Common myeloid progenitor, CD34-positive (primary cell): ENCODE measurements at regions of chr9 and their contacts with region 1.

Region 1: GRCh38 chr9:121463026-121463807 is 36.4 kb downstream of the GGTA1 start:
- DNase-seq: peak; percentile 42 to 64 (median 54)
- H3K4me3 ChIP-seq: no peak overlapping the region
- H3K27ac ChIP-seq: no peak overlapping the region
- H3K4me1 ChIP-seq: peaks cover 0 to 6% (median 0%) of the 10 kb centered on the region in 4 experiments
- H3K27me3 ChIP-seq: no peaks in the 10 kb centered on the region

Region 2: GRCh38 chr9:121439711-121440664 is 23.2 kb before region 1 on chr9:
- CTCF ChIA-PET with region 1: interaction called, 14 read pairs
- POLR2A ChIA-PET with region 1: no interaction called
- DNase-seq: no peak
- H3K4me3 ChIP-seq: no peak overlapping the region
- H3K27ac ChIP-seq: no peak overlapping the region
- H3K4me1 ChIP-seq: no peaks in the 10 kb centered on the region
- H3K27me3 ChIP-seq: peaks cover 0 to 8% (median 0%) of the 10 kb centered on the region in 5 experiments

Region 3: DNA sequence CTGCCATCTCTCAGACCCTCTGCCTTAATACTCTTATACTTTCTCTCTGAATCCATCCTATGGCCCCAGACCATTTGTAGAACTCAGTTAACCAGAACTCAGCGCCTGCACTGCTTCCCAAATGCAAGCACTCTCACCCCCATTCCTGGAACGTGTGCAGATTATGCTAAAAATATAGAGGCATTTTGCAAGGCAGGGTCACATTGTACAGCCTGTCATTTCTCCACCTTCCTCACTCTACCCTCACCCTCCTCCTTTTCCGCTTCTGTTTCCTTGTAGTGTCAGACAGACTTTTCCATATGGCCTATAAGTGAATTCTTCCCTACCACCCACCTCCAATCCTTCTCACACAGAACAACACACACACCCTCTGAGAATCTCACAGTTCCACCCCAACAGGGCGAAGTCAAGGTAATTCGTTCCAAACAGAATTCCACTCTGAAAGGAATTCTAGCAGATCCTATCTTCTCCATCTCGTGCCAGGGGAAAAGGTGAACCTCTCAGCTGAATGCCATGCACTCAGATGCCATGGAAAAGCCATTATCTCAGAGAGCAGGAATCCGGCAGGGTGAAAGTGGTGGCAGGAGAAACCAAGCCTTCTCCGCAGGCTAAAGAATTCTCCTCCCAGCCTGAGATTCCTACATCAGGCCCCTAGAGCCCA is 11.1 kb after region 1 on chr9:
- CTCF ChIA-PET with region 1: interaction called, 14 read pairs
- POLR2A ChIA-PET with region 1: interaction called, 3 read pairs
- DNase-seq: no peak
- H3K4me3 ChIP-seq: no peak overlapping the region
- H3K27ac ChIP-seq: no peak overlapping the region
- H3K4me1 ChIP-seq: peaks cover 0 to 5% (median 0%) of the 10 kb centered on the region in 4 experiments
- H3K27me3 ChIP-seq: no peaks in the 10 kb centered on the region

Region 4: GRCh38 chr9:121491111-121491510 is 27.9 kb after region 1 on chr9:
- CTCF ChIA-PET with region 1: interaction called, 26 read pairs
- POLR2A ChIA-PET with region 1: no interaction called
- DNase-seq: no peak
- H3K4me3 ChIP-seq: no peak overlapping the region
- H3K27ac ChIP-seq: no peak overlapping the region
- H3K4me1 ChIP-seq: peaks cover 5 to 34% (median 27%) of the 10 kb centered on the region in 4 experiments
- H3K27me3 ChIP-seq: no peaks in the 10 kb centered on the region

Region 5: GRCh38 chr9:121538246-121538645 is 75.0 kb after region 1 on chr9:
- CTCF ChIA-PET with region 1: interaction called, 36 read pairs
- POLR2A ChIA-PET with region 1: interaction called, 3 read pairs
- DNase-seq: peak; percentile 57 to 65 (median 63)
- H3K4me3 ChIP-seq: no peak overlapping the region
- H3K27ac ChIP-seq: no peak overlapping the region
- H3K4me1 ChIP-seq: peaks cover 0 to 8% (median 5%) of the 10 kb centered on the region in 4 experiments
- H3K27me3 ChIP-seq: no peaks in the 10 kb centered on the region

Region 6: DNA sequence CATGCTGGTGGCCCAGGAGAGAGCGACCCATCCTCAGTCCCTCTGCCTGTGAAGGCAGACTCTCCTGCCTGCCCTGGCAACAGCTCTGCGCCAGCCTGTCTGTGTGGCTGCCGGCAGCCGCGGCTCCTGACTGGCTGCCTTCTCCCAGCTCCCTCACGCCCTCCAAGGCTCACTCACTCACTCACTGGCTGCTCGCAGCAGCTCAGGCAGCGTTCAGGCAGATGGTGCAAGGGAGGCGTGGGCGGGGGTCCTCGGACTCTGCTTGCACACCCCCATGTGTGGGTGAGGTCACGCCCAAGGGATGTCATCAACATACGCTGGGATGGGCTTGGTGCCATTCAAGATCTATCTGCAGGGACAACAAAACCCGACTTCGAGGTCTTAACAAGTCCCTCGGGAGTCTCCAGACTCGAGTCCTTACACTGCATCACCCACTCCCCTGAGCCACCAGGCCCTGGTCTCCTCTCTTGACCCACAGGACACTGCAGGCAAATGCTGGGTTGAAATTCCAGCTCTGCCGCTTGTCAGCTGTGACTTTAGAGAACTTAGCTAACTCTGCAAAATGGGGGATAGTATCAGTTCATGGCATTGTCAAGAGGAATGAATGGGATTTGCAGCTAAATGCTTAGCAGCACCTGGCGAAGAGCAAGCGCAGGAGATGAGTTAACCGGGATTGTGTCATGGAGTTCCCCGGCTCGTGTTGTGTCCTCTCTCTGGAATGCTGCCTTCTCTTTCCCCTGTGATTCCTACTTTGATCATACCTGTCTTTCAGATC is 255.1 kb after region 1 on chr9:
- CTCF ChIA-PET with region 1: no interaction called
- POLR2A ChIA-PET with region 1: no interaction called
- DNase-seq: no peak
- H3K4me3 ChIP-seq: no peak overlapping the region
- H3K27ac ChIP-seq: no peak overlapping the region
- H3K4me1 ChIP-seq: peaks cover 0 to 20% (median 1%) of the 10 kb centered on the region in 4 experiments
- H3K27me3 ChIP-seq: no peaks in the 10 kb centered on the region